ENCODE measurements at regions of chr16 and their contacts with region 1.

Region 1: GRCh38 chr16:84084570-84085270 is 32.0 kb downstream of the MBTPS1 start:
- DNase-seq: peak; percentile 81
- H3K4me3 Mint-ChIP-seq: no peak overlapping the region
- H3K27ac Mint-ChIP-seq: no peak overlapping the region
- H3K4me1 Mint-ChIP-seq: peaks cover 46% of the 10 kb centered on the region
- H3K27me3 Mint-ChIP-seq: no peaks in the 10 kb centered on the region

Region 2: DNA sequence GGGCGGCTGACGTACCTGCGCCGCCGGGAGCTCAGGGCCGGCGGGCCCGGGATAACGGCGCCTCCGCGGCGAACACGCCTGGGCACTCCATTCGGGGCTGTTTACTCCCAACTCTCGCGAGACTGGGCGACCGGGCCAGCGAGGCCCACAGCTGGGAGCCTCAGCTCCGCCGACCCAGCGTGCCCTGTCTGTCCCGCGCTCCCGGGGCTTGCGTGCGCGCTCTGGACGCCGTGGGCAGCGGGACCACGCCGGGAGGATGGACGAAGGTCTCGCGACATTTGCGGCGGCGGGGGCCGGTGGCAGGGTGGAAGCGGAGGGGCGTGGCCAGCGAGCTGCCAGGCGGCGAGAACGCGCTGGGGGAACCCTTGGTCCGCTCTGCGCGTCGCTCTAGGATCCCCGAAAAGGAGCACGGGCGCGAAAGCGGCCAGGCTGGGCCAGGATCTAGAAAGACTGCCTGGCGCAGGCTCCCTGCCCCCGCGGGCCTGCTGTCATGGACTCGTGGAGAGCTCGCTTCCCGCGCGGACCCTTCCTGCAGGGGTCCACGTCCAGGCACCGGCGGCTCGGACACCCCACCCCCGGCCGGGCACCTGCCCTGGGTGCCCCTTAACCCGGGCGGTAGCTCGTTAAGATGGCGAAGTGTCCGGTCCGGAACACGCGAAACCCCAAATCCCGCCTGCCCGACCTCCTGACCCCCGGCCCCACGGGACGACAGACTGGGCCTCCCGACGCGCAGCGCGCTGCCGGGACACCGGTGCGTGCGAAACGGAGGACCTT is 32.2 kb after region 1 on chr16 and contains the start of gene MBTPS1:
- CTCF ChIA-PET with region 1: interaction called, 12 read pairs
- DNase-seq: peak; percentile 98
- H3K4me3 Mint-ChIP-seq: peak within 1 kb of the TSS; percentile 93
- H3K27ac Mint-ChIP-seq: peak within 1 kb of the TSS; percentile 94
- H3K4me1 Mint-ChIP-seq: peaks cover 25% of the 10 kb centered on the region
- H3K27me3 Mint-ChIP-seq: no peaks in the 10 kb centered on the region

Region 3: GRCh38 chr16:84175350-84176081 is 90.8 kb after region 1 on chr16:
- CTCF ChIA-PET with region 1: interaction called, 123 read pairs
- DNase-seq: peak; percentile 77
- H3K4me3 Mint-ChIP-seq: no peak overlapping the region
- H3K27ac Mint-ChIP-seq: no peak overlapping the region
- H3K4me1 Mint-ChIP-seq: no peaks in the 10 kb centered on the region
- H3K27me3 Mint-ChIP-seq: peaks cover 12% of the 10 kb centered on the region

Region 4: GRCh38 chr16:84186685-84187437 is 102.1 kb after region 1 on chr16 and contains the start of gene TAF1C:
- CTCF ChIA-PET with region 1: interaction called, 34 read pairs
- DNase-seq: peak; percentile 91
- H3K4me3 Mint-ChIP-seq: peak within 1 kb of the TSS; percentile 88
- H3K27ac Mint-ChIP-seq: peak within 1 kb of the TSS; percentile 85
- H3K4me1 Mint-ChIP-seq: peaks cover 25% of the 10 kb centered on the region
- H3K27me3 Mint-ChIP-seq: no peaks in the 10 kb centered on the region